MCF 10A (cell line): ENCODE measurements at regions of chr6 and their contacts with region 1.

Region 1: GRCh38 chr6:108655806-108656651 is 95.3 kb downstream of the FOXO3 start:
- DNase-seq: no peak
- H3K4me3 Mint-ChIP-seq: no peak overlapping the region
- H3K27ac Mint-ChIP-seq: peak overlapping the region; percentile 83
- H3K4me1 Mint-ChIP-seq: peaks cover 58% of the 10 kb centered on the region
- H3K27me3 Mint-ChIP-seq: no peaks in the 10 kb centered on the region
- CTCF ChIP-seq: no peak

Region 2: GRCh38 chr6:108592371-108593337 is 63.4 kb before region 1 on chr6:
- CTCF ChIA-PET with region 1: no interaction called
- POLR2A ChIA-PET with region 1: interaction called, 49 read pairs
- intact Hi-C with region 1: loop called (anchors 2 kb)
- DNase-seq: peak; percentile 77
- H3K4me3 Mint-ChIP-seq: peak overlapping the region; percentile 39
- H3K27ac Mint-ChIP-seq: peak overlapping the region; percentile 87
- H3K4me1 Mint-ChIP-seq: peaks cover 69% of the 10 kb centered on the region
- H3K27me3 Mint-ChIP-seq: no peaks in the 10 kb centered on the region
- CTCF ChIP-seq: no peak

Region 3: DNA sequence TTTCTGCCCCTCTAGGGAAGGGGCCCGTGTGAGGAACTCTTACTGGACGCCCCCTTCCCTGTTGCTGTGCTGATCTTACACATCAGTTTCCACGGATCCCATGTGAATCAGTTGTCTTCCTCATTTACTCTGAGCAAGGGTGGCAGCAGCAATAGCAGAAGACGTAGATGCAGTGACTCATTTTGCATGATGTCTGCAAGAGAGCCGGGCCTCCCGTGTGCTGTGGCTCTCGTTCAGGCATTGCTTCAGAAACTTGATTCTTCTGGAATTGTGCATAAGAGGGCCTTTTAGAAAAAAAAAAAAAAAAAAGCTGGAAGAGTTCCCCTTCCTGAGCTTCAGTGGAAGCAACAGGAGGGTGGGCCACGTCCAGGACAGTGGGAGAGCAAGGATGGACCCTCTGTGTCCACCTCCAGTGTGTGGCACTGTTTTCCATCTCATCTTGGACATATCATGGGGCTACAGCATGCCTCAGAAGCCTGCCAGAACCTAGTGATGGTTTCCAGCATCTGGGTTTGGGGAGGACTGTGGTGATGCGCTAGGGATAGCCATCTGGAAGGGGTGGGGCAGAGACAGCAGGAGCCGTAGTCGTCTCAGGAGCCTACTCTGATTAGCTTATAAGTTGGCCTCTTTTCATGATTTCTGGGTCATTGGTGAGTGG is 33.3 kb before region 1 on chr6:
- CTCF ChIA-PET with region 1: interaction called, 7 read pairs
- POLR2A ChIA-PET with region 1: interaction called, 16 read pairs
- intact Hi-C with region 1: no loop called
- DNase-seq: peak; percentile 77
- H3K4me3 Mint-ChIP-seq: peak overlapping the region; percentile 38
- H3K27ac Mint-ChIP-seq: peak overlapping the region; percentile 77
- H3K4me1 Mint-ChIP-seq: peaks cover 76% of the 10 kb centered on the region
- H3K27me3 Mint-ChIP-seq: no peaks in the 10 kb centered on the region
- CTCF ChIP-seq: no peak

Region 4: GRCh38 chr6:108689247-108690161 is 33.5 kb after region 1 on chr6:
- CTCF ChIA-PET with region 1: interaction called, 3 read pairs
- POLR2A ChIA-PET with region 1: interaction called, 12 read pairs
- intact Hi-C with region 1: no loop called
- DNase-seq: peak; percentile 100
- H3K4me3 Mint-ChIP-seq: peak overlapping the region; percentile 32
- H3K27ac Mint-ChIP-seq: peak overlapping the region; percentile 73
- H3K4me1 Mint-ChIP-seq: peaks cover 51% of the 10 kb centered on the region
- H3K27me3 Mint-ChIP-seq: no peaks in the 10 kb centered on the region
- CTCF ChIP-seq: no peak

Region 5: GRCh38 chr6:108782179-108783041 is 126.4 kb after region 1 on chr6:
- CTCF ChIA-PET with region 1: interaction called, 3 read pairs
- POLR2A ChIA-PET with region 1: interaction called, 4 read pairs
- intact Hi-C with region 1: loop called (anchors 2 kb)
- DNase-seq: peak; percentile 92
- H3K4me3 Mint-ChIP-seq: peak overlapping the region; percentile 62
- H3K27ac Mint-ChIP-seq: peak overlapping the region; percentile 83
- H3K4me1 Mint-ChIP-seq: peaks cover 18% of the 10 kb centered on the region
- H3K27me3 Mint-ChIP-seq: no peaks in the 10 kb centered on the region
- CTCF ChIP-seq: peak; percentile 70